Naive thymus-derived CD4-positive, alpha-beta T cell (primary cell): ENCODE measurements at regions of chr14 and their contacts with region 1.

Region 1: DNA sequence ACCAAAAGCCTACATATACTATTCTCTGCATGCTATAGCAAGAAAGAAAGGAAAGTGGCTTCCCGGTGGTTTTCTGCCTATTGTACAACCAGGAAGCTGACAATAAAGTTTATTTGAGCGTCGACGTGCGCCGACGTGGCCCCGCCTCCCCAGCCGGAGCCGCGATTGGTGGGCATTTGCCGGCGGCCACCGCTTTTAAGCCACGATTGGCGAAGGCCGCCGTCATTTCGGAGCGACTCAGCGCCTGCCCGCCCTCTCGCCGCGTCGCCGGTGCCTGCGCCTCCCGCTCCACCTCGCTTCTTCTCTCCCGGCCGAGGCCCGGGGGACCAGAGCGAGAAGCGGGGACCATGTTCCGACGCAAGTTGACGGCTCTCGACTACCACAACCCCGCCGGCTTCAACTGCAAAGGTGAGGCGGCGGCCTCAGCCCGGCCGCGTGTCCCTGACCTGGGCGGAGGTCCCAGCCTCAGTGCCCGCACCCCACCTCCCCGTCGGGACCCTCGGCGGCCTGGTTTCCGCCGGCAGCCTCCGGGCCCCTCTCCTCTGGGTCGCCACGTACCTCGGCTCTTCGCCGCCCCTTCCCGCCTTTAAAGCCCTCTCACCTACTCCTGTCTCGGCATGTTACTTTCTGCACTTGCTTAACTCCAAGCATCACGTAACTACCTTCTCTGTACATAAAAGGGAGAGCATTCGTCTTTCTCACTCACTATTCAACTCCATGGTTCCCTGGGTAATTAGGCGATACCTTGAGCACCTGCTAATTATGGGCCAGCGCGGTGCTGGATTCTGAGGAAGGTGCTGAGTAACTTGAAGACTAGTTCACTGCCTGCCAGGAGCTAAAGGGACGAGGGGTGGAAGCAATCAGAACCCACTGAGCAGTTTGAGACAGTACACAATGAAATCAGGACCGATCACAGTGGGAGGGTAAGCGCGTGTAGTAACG is at the start of gene RTRAF:
- DNase-seq: peak; percentile 86 to 93 (median 91)
- ATAC-seq: peak; percentile 98
- H3K4me3 ChIP-seq: peak within 1 kb of the TSS; percentile 60
- H3K4me3 Mint-ChIP-seq: peak within 1 kb of the TSS; percentile 93 to 97 (median 95)
- H3K27ac ChIP-seq: peak within 1 kb of the TSS; percentile 88
- H3K27ac Mint-ChIP-seq: peak within 1 kb of the TSS; percentile 91 to 99 (median 95)
- H3K4me1 ChIP-seq: peaks cover 19 to 22% of the 10 kb centered on the region in 2 donors
- H3K4me1 Mint-ChIP-seq: peaks cover 20 to 57% (median 50%) of the 10 kb centered on the region in 7 donors
- H3K27me3 ChIP-seq: no peaks in the 10 kb centered on the region
- H3K27me3 Mint-ChIP-seq: peaks cover 0 to 4% (median 0%) of the 10 kb centered on the region in 5 donors
- total RNA-seq, gene RTRAF: 112 to 180 (median 116) TPM

Region 2: DNA sequence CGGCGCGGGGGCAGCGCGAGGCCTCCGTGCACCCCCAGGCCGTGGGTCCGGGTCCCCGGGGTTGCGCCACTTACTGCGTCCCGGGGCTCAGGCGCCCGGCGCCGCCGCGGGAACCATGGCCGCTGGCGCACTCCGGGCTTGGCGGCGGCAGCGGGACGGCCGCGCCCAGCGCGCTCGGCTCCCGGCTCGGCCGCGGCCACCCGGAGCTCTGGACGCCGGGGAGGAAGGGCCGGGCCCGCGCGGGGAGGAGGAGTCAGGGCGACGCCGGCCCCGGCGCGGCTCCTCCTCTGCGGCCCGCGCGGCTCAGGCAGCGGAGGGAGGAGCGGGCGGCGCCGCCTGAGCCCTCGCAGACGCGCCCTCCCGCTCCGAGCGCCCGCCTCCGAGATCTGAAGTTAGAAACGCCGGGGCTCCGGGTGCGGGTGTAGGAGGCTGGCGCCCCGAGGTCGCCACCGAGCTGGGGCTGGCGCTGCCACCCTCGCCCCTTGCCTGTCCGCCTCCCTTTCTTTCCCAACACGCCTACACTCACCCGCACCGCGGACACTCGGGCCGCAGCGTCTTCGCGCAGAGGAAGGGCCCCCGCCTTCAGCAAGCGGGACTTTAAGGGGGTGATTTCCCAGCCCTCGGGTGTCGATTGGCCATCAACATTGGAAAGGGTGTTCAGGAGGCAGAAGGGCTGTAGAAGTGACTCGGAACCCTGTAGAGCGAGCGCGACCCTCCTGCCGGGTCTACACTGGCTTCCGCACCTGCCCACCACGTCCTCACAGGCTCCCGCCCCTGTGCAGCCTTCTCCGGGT is 1158.4 kb before region 1 on chr14 and contains the start of gene NIN:
- CTCF ChIA-PET with region 1: no interaction called
- POLR2A ChIA-PET with region 1: no interaction called
- intact Hi-C with region 1: loop called in 1 of 2 experiments (anchors 10 kb)
- DNase-seq: peak; percentile 58 to 80 (median 74)
- ATAC-seq: peak; percentile 91
- H3K4me3 ChIP-seq: peak within 1 kb of the TSS; percentile 80
- H3K4me3 Mint-ChIP-seq: peak within 1 kb of the TSS; percentile 91 to 99 (median 96)
- H3K27ac ChIP-seq: peak within 1 kb of the TSS; percentile 84
- H3K27ac Mint-ChIP-seq: peak within 1 kb of the TSS; percentile 85 to 99 (median 95)
- H3K4me1 ChIP-seq: peaks cover 40 to 42% of the 10 kb centered on the region in 2 donors
- H3K4me1 Mint-ChIP-seq: peaks cover 46 to 84% (median 74%) of the 10 kb centered on the region in 7 donors
- H3K27me3 ChIP-seq: no peaks in the 10 kb centered on the region
- H3K27me3 Mint-ChIP-seq: peaks cover 0 to 13% (median 0%) of the 10 kb centered on the region in 5 donors
- total RNA-seq, gene NIN: 84.5 to 149 (median 128) TPM

Region 3: DNA sequence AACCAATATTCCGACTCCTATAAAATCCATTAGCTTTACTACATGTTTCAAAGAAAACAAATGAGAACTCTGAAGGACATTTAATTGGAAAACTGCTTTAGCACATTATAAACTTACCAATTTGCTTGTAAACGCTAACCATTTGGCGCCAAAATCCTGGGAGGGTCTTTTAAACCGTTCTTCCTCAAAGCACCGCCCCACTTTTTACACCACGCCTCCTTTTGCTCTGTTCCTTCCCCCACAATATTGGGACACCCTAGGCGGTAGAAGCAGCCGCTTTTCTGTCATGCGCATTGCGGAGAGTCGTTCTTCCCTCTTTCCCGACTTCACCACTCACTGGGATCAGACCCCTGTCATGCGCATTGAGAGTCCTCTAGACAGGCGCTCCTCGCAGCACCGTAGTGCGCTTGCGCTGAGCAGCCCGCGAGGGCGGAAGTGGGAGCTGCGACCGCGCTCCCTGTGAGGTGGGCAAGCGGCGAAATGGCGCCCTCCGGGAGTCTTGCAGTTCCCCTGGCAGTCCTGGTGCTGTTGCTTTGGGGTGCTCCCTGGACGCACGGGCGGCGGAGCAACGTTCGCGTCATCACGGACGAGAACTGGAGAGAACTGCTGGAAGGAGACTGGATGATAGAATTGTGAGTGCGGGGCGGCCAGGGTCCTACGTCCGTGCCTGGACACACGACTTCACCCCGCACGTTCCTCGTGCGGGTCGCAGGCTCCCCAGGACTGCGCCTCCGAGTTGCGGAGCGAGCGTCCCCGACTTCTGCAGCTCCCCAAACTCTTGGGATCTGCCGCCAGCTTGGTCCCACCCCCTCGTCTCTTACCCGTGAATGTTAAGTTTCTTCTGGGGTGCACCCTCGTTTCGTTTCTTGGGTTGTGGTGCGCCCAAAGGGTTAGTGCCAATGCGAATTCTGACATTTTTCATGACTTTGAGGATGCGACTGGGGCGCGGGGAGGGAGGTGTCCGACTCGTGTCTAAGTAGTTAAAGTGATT is 749.5 kb before region 1 on chr14 and contains the start of gene TMX1:
- CTCF ChIA-PET with region 1: no interaction called
- POLR2A ChIA-PET with region 1: no interaction called
- intact Hi-C with region 1: loop called (anchors 1 kb)
- DNase-seq: peak; percentile 70 to 88 (median 82)
- ATAC-seq: peak; percentile 94
- H3K4me3 ChIP-seq: peak within 1 kb of the TSS; percentile 99
- H3K4me3 Mint-ChIP-seq: no peak within 1 kb of the TSS
- H3K27ac ChIP-seq: peak within 1 kb of the TSS; percentile 81
- H3K27ac Mint-ChIP-seq: no peak within 1 kb of the TSS
- H3K4me1 ChIP-seq: peaks cover 16 to 17% of the 10 kb centered on the region in 2 donors
- H3K4me1 Mint-ChIP-seq: peaks cover 0 to 29% (median 20%) of the 10 kb centered on the region in 7 donors
- H3K27me3 ChIP-seq: no peaks in the 10 kb centered on the region
- H3K27me3 Mint-ChIP-seq: no peaks in the 10 kb centered on the region
- total RNA-seq, gene TMX1: 13.3 to 48.3 (median 23.1) TPM

Region 4: GRCh38 chr14:51865953-51866747 is 123.4 kb before region 1 on chr14:
- CTCF ChIA-PET with region 1: no interaction called
- POLR2A ChIA-PET with region 1: no interaction called
- intact Hi-C with region 1: loop called (anchors 2 to 5 kb)
- DNase-seq: peak in 3 of 9 donors; percentile 33 to 44 (median 37)
- ATAC-seq: peak; percentile 72
- H3K4me3 ChIP-seq: no peak overlapping the region
- H3K4me3 Mint-ChIP-seq: peak overlapping the region in 2 of 10 donors; percentile 10 to 27
- H3K27ac ChIP-seq: peak overlapping the region; percentile 50
- H3K27ac Mint-ChIP-seq: peak overlapping the region in 1 of 9 donors; percentile 11
- H3K4me1 ChIP-seq: peaks cover 57 to 63% of the 10 kb centered on the region in 2 donors
- H3K4me1 Mint-ChIP-seq: peaks cover 16 to 44% (median 28%) of the 10 kb centered on the region in 7 donors
- H3K27me3 ChIP-seq: no peaks in the 10 kb centered on the region
- H3K27me3 Mint-ChIP-seq: no peaks in the 10 kb centered on the region

Region 5: DNA sequence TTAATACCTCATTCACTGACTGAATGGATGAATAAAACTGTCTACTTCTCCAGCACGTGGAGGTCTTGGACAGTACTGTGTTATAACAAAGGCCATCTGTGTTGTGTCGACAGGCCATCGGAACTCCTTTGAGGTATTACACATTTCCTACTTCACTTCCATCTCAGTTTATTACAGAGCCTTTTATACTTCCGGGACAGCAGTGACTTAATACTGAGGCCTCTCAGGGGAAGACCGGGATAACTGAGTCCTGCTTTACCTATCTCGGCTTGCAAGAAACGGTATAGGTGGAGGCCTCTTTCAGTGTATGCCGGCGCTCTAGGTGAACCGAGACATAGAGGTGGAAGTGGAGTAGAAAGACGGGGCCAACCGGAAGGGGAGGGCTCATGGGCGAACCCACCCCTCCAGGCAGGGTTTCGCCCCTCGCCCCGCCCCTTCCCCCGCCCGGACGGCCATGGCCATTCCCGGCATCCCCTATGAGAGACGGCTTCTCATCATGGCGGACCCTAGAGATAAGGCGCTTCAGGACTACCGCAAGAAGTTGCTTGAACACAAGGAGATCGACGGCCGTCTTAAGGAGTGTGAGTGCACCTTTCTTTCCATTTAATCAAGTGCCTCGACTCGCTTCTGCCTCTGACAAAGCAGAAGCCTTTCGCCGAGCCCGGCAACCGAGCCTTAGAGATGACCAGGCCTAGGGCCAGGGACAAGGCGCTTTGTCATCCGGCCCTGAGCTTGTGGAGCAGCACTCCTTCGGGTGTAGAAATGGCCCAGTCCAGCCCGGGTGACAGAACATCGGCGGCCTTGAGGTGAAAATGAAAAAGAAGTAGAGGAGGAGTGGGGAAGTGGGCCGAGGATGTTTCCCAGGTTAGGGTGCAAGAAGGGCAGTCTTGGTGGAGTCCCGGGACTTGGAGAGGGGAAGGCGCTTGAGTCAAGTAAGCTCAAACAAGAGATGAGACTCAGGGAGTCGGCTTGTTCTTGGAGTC is 717.5 kb after region 1 on chr14 and contains the start of gene PSMC6:
- CTCF ChIA-PET with region 1: no interaction called
- POLR2A ChIA-PET with region 1: no interaction called
- intact Hi-C with region 1: loop called in 1 of 2 experiments (anchors 5 kb)
- DNase-seq: peak; percentile 82 to 93 (median 90)
- ATAC-seq: peak; percentile 99
- H3K4me3 ChIP-seq: peak within 1 kb of the TSS; percentile 74
- H3K4me3 Mint-ChIP-seq: peak within 1 kb of the TSS; percentile 96 to 100 (median 98)
- H3K27ac ChIP-seq: peak within 1 kb of the TSS; percentile 82
- H3K27ac Mint-ChIP-seq: peak within 1 kb of the TSS; percentile 95 to 98 (median 97)
- H3K4me1 ChIP-seq: peaks cover 11 to 16% of the 10 kb centered on the region in 2 donors
- H3K4me1 Mint-ChIP-seq: peaks cover 28 to 60% (median 52%) of the 10 kb centered on the region in 7 donors
- H3K27me3 ChIP-seq: no peaks in the 10 kb centered on the region
- H3K27me3 Mint-ChIP-seq: no peaks in the 10 kb centered on the region
- total RNA-seq, gene PSMC6: 84.8 to 131 (median 95.9) TPM

Region 6: DNA sequence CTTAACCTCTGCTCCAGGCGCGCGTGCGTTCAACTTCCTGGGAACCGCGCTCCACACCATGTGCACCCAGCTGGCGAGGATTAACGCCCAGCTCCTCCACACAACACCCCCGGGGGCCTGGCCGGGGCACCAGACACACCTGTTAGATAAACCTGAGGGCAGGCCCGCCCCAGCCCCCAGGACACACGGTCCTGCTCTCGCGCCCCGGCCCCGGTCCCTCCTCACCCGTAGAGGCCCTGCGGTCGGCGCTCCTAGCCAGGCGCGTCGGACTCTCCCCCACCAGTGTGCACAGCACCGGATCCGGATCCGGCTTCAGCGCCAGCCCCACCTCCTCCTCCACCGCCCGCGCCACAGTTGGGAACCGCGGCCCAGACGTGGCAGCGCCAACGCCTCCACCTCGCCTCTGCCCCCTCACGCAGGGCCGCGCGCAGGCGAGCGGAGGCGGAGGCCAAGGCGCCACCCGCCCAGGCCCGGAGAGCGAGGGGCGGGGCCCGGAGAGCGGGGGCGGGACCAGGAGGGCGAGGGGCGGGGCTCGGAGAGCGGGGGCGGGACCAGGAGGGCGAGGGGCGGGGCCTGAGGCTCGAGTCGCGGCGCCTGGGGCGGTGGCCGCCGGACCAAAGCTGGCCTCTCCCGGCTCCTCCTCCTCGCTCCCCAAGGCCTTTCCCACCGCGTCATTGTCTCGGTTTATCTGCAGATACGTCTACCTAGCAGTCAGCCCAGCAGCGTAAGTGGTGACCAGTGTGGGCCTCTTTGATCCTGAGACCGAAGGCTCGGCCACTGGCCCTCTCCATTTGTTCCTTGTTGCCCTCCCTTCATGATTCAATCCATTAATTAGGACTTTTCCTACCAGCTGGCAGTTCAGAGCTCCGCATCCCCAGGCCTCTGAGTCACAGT is 801.9 kb after region 1 on chr14 and contains the start of gene GNPNAT1:
- CTCF ChIA-PET with region 1: no interaction called
- POLR2A ChIA-PET with region 1: no interaction called
- intact Hi-C with region 1: loop called (anchors 5 to 10 kb)
- DNase-seq: peak; percentile 85 to 92 (median 89)
- ATAC-seq: peak; percentile 98
- H3K4me3 ChIP-seq: peak within 1 kb of the TSS; percentile 87
- H3K4me3 Mint-ChIP-seq: peak within 1 kb of the TSS; percentile 86 to 94 (median 93)
- H3K27ac ChIP-seq: peak within 1 kb of the TSS; percentile 74
- H3K27ac Mint-ChIP-seq: peak within 1 kb of the TSS; percentile 75 to 96 (median 89)
- H3K4me1 ChIP-seq: peaks cover 15 to 18% of the 10 kb centered on the region in 2 donors
- H3K4me1 Mint-ChIP-seq: peaks cover 23 to 48% (median 44%) of the 10 kb centered on the region in 7 donors
- H3K27me3 ChIP-seq: no peaks in the 10 kb centered on the region
- H3K27me3 Mint-ChIP-seq: no peaks in the 10 kb centered on the region
- total RNA-seq, gene GNPNAT1: 4.6 to 14.7 (median 8.5) TPM